OCI-LY7 (cell line): ENCODE measurements at regions of chr22 and their contacts with region 1.

Region 1: DNA sequence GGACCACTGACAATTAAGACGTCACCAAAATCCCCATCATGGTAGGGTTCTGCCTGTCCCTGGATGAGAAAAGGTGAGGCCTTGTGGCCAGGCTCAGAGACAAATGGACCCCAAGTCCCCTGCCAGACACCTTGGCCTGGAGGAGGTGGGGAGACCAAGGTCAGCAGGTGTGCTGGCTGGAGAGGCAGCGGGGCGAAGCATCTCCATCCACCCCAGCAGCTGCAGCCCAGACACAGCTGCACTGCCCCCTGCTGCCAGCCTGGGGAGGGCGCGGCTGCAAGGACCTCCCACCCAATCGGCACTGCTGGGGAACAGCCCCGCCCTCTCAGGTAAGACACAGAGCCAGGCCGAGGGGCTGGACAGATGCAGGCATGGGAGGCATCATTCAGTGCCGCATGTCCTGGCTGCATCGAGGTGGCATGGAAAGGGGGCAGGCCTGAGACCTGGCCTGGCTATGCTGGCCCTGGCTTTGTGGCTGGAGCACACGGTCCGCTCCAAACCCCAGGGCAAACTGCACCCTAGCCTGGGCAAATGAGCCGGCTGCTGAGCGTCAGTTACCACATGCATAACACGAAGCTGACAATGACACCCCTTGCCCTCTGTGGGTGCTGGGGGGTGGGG is 12.2 kb upstream of the MFNG start:
- DNase-seq: peak; percentile 88
- H3K4me3 ChIP-seq: no peak overlapping the region
- H3K27ac ChIP-seq: no peak overlapping the region
- H3K4me1 ChIP-seq: peaks cover 24% of the 10 kb centered on the region
- CTCF ChIP-seq: peak; percentile 83

Region 2: DNA sequence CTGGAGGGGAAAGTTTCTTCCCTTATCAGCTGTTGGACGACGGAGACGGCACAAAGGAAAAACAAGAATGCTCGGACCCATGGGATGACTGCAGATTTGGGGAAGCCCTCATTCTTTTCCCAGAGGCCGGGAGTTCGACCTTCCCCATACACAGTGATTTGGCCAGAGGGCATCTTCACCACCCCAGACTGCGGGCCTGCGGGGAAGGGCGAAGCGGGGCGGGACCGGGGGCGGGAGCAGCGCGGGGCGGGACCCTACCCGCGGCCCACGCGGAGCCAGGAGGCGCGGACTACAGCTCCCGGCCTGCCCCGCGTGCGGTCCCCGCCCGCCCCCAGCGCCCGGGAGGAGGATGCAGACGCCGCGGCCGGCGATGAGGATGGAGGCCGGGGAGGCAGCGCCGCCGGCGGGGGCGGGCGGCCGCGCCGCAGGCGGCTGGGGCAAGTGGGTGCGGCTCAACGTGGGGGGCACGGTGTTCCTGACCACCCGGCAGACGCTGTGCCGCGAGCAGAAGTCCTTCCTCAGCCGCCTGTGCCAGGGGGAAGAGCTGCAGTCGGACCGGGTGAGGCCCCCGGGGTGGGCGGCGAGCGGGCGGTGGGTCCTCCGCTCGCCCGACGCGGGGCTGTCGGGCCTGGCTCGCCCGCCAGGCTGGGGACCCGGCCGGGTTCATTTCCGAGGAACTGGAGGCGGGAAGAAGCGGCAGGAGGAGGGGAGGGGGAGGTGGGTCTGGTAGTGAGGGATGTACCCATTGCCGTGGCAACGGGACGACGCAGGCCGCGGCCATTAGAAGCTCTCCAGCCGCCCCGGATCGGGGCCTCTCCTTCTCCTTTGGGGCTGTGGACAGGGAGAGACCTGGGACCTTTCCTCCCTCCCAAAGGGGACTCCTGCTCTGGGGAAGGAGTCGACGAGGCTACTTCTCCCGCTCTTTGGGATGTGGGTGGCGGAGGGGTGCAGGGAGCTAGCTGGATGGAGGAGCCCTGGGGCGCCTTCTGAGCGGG is 446.7 kb before region 1 on chr22 and contains the start of gene KCTD17:
- CTCF ChIA-PET with region 1: no interaction called
- POLR2A ChIA-PET with region 1: no interaction called
- intact Hi-C with region 1: no loop called
- DNase-seq: peak; percentile 83
- H3K4me3 ChIP-seq: peak within 1 kb of the TSS; percentile 97
- H3K27ac ChIP-seq: no peak within 1 kb of the TSS
- H3K4me1 ChIP-seq: peaks cover 13% of the 10 kb centered on the region
- CTCF ChIP-seq: peak; percentile 42; the same call in 1 of the 2 replicates
- total RNA-seq, gene KCTD17: 17.7 and 20.3 TPM in 2 replicates

Region 3: GRCh38 chr22:37462983-37463382 is 35.4 kb before region 1 on chr22:
- CTCF ChIA-PET with region 1: no interaction called
- POLR2A ChIA-PET with region 1: no interaction called
- intact Hi-C with region 1: loop called (anchors 5 kb)
- DNase-seq: no peak
- H3K4me3 ChIP-seq: no peak overlapping the region
- H3K27ac ChIP-seq: peak overlapping the region; percentile 64
- H3K4me1 ChIP-seq: peaks cover 49% of the 10 kb centered on the region
- CTCF ChIP-seq: no peak

Region 4: GRCh38 chr22:37472418-37473006 is 25.9 kb before region 1 on chr22:
- CTCF ChIA-PET with region 1: interaction called, 7 read pairs
- POLR2A ChIA-PET with region 1: interaction called, 3 read pairs
- intact Hi-C with region 1: loop called (anchors 1 kb)
- DNase-seq: peak; percentile 55
- H3K4me3 ChIP-seq: no peak overlapping the region
- H3K27ac ChIP-seq: peak overlapping the region; percentile 63
- H3K4me1 ChIP-seq: peaks cover 52% of the 10 kb centered on the region
- CTCF ChIP-seq: peak; percentile 87